Head of caudate nucleus (tissue), 42 donors: ENCODE measurements at regions of chr20 and their contacts with region 1.

Region 1: GRCh38 chr20:41639630-41640029 is 21.5 kb upstream of the CHD6 start:
- DNase-seq: no peak

Region 2: DNA sequence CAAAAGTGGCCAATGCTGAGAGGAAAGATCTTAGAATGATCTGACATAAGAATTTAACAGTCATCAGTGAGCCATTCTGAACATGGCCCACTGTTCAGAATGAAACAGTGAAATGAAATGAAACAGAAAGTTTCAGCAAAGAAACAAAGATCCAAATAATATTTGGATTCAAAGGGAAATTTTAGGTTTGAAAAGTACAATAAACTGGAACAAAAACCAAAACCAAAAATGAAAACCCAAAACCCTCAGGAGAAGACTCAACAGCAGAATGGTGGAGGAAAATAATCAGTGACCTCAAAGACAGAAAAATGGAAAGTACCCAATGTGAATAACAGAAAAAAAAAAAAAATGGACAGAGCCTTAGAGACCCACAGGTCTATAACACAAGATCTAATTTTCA is 206.9 kb before region 1 on chr20:
- intact Hi-C with region 1: loop called (anchors 5 kb)
- DNase-seq: no peak